B cell (primary cell): ENCODE measurements at regions of chr19 and their contacts with region 1.

Region 1: GRCh38 chr19:1863726-1864480 is 524 bp upstream of the KLF16 start:
- DNase-seq: peak; percentile 97
- ATAC-seq: peak; percentile 66
- H3K4me3 ChIP-seq: peak overlapping the region in 4 of 5 experiments; percentile 67 to 90 (median 72)
- H3K4me3 Mint-ChIP-seq: peak overlapping the region; percentile 82
- H3K27ac ChIP-seq: peak overlapping the region; percentile 90 to 95
- H3K27ac Mint-ChIP-seq: peak overlapping the region; percentile 93
- H3K4me1 ChIP-seq: peaks cover 26 to 42% of the 10 kb centered on the region in 2 donors
- H3K4me1 Mint-ChIP-seq: peaks cover 33% of the 10 kb centered on the region
- H3K27me3 ChIP-seq: no peaks in the 10 kb centered on the region
- H3K27me3 Mint-ChIP-seq: no peaks in the 10 kb centered on the region
- CTCF ChIP-seq: no peak

Region 2: DNA sequence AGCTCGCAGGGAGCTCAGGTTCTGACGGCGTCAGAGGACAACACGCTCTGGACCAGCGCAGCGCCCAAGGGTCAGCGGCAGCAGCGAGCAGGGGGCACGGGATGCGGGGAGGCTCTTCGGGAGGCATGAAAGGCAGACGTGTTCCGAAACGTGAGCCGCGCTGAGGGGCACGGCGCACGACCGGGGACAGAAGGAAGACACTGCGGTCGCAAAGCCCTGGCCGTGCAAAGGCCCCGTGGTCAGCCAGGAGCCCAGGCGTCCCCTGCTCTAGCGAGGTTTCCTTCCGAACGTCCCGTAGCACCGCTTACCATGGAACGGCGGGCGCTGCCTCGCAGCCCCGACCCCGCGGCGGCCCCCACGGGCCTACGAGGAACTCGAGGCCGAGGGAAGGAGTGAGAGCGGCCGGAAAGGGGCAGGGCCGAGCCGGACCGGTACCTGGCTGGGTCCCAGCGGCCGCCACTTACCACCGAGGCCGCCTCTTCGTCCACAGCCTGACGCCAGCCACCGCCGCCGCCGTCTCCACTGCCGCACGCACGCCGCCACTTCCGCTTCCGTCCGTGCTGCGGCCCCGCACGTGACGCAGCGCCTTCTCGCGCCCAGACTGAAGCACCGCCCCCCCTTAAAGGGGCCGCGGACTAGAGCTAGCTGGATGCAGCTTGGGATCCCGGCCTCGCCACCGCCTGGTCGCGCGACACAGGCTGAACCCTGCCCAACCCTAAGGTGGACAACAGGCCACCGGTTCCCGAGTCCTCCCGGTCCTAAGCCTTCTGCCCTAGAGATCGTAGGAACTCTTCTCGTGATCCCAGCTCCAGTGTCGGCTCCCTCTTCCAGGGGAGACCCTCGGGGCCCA is 12.0 kb after region 1 on chr19:
- CTCF ChIA-PET with region 1: interaction called, 19 read pairs
- POLR2A ChIA-PET with region 1: interaction called, 20 read pairs
- intact Hi-C with region 1: loop called (anchors 1 kb)
- DNase-seq: peak; percentile 93
- ATAC-seq: peak; percentile 94
- H3K4me3 ChIP-seq: peak overlapping the region; percentile 81 to 97 (median 92)
- H3K4me3 Mint-ChIP-seq: peak overlapping the region; percentile 99
- H3K27ac ChIP-seq: peak overlapping the region; percentile 66 to 96
- H3K27ac Mint-ChIP-seq: peak overlapping the region; percentile 94
- H3K4me1 ChIP-seq: peaks cover 20 to 36% of the 10 kb centered on the region in 2 donors
- H3K4me1 Mint-ChIP-seq: peaks cover 28% of the 10 kb centered on the region
- H3K27me3 ChIP-seq: no peaks in the 10 kb centered on the region
- H3K27me3 Mint-ChIP-seq: no peaks in the 10 kb centered on the region
- CTCF ChIP-seq: no peak

Region 3: GRCh38 chr19:1905071-1905862 is 41.4 kb after region 1 on chr19 and contains the starts of genes ADAT3 and SCAMP4:
- CTCF ChIA-PET with region 1: interaction called, 8 read pairs
- POLR2A ChIA-PET with region 1: interaction called, 4 read pairs
- intact Hi-C with region 1: loop called (anchors 1 kb)
- DNase-seq: peak; percentile 98
- ATAC-seq: peak; percentile 92
- H3K4me3 ChIP-seq: peak within 1 kb of the TSS; percentile 8 to 75 (median 66)
- H3K4me3 Mint-ChIP-seq: peak within 1 kb of the TSS; percentile 90
- H3K27ac ChIP-seq: peak within 1 kb of the TSS; percentile 78 to 90
- H3K27ac Mint-ChIP-seq: peak within 1 kb of the TSS; percentile 96
- H3K4me1 ChIP-seq: peaks cover 48 to 70% of the 10 kb centered on the region in 2 donors
- H3K4me1 Mint-ChIP-seq: peaks cover 49% of the 10 kb centered on the region
- H3K27me3 ChIP-seq: no peaks in the 10 kb centered on the region
- H3K27me3 Mint-ChIP-seq: no peaks in the 10 kb centered on the region
- CTCF ChIP-seq: no peak
- total RNA-seq, gene ADAT3: 13.4 and 13.9 TPM in 2 replicates
- total RNA-seq, gene SCAMP4: 60.0 and 62.9 TPM in 2 replicates

Region 4: DNA sequence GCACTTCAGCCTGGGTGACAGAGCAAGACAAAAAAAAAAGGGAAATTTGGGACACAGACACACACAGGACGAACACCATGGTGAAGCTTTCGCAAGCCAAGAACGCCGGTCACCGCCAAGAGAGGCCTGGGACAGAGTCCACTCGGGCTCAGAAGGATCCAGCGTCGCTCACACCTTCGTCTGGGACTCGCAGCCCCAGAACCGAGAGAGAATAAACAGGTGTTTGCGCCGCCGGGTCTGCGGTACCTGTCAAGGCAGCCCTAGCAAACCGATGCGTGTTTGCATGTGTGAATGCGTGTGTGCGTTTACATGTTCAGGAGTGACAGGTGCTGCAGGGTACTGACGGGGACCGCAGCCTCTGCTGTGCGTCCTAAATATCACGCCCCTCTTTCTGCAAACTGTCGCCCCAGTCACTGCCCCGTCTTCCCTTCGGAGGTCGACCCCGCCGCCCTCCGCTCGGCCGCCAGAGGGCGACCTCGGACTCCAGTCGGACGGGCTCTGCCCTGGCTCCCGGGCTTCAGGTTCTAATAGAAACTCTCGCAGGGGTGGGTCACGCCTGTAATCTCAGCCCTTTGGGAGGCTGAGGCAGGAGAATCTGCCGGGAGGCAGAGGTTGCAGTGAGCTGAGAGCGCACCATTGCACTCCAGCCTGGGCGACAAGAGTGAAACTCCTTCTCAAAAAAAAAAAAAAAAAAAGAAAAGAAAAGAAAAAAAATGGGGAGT is 65.3 kb after region 1 on chr19:
- CTCF ChIA-PET with region 1: interaction called, 22 read pairs
- POLR2A ChIA-PET with region 1: interaction called, 4 read pairs
- intact Hi-C with region 1: no loop called
- DNase-seq: peak; percentile 87
- ATAC-seq: peak; percentile 80
- H3K4me3 ChIP-seq: peak overlapping the region in 4 of 5 experiments; percentile 40 to 63 (median 48)
- H3K4me3 Mint-ChIP-seq: peak overlapping the region; percentile 84
- H3K27ac ChIP-seq: no peak overlapping the region
- H3K27ac Mint-ChIP-seq: peak overlapping the region; percentile 80
- H3K4me1 ChIP-seq: peaks cover 33 to 47% of the 10 kb centered on the region in 2 donors
- H3K4me1 Mint-ChIP-seq: peaks cover 44% of the 10 kb centered on the region
- H3K27me3 ChIP-seq: no peaks in the 10 kb centered on the region
- H3K27me3 Mint-ChIP-seq: no peaks in the 10 kb centered on the region
- CTCF ChIP-seq: peak; percentile 96

Region 5: GRCh38 chr19:2269244-2269947 is 405.5 kb after region 1 on chr19:
- CTCF ChIA-PET with region 1: no interaction called
- POLR2A ChIA-PET with region 1: interaction called, 3 read pairs
- intact Hi-C with region 1: loop called (anchors 5 kb)
- DNase-seq: peak; percentile 99
- ATAC-seq: peak; percentile 66
- H3K4me3 ChIP-seq: peak overlapping the region; percentile 59 to 100 (median 99)
- H3K4me3 Mint-ChIP-seq: peak overlapping the region; percentile 89
- H3K27ac ChIP-seq: peak overlapping the region; percentile 79 to 94
- H3K27ac Mint-ChIP-seq: peak overlapping the region; percentile 97
- H3K4me1 ChIP-seq: peaks cover 56 to 66% of the 10 kb centered on the region in 2 donors
- H3K4me1 Mint-ChIP-seq: peaks cover 52% of the 10 kb centered on the region
- H3K27me3 ChIP-seq: no peaks in the 10 kb centered on the region
- H3K27me3 Mint-ChIP-seq: no peaks in the 10 kb centered on the region
- CTCF ChIP-seq: no peak